ENCODE measurements at regions of chr7 and their contacts with region 1.

Region 1: GRCh38 chr7:151327659-151328058 is 14.0 kb upstream of the NUB1 start:
- DNase-seq: no peak

Region 2: DNA sequence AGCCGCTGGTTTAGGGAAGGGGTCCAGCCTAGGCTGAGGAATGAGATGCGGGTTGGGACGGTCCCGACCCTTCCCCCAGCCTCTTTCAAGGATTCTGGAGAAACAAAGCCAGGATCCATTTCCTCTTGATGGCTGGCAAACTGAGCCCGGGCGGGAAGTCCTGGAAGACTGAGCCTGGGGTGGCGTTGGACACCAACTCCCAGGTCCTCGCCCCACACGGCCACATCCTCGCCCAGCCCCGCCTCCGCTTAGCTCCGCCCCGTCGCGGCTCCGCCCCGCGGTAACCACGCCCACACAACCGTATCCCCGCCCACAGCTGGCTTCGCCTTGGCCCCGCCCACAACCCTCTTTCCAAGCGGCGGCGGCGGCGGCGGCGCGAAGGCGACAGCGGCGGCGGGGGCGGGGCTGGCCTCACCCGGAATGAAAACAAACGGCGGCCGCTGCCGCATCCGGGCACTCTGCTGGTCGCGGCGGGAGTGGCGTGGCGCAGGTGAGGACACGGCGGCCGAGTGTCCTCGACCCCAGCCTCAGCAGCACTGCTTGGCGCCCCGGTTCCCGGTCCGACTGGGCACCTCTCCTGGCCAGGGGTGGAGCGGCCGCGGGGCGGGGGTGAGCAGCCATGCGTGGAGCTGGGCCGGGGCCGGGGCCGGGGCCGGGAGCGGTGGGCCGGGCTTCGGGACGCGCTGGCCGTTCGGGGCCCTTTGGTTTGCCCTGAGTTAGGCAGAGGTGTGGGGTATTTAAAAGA is 13.9 kb after region 1 on chr7 and contains the start of gene NUB1:
- CTCF ChIA-PET with region 1: no interaction called
- POLR2A ChIA-PET with region 1: interaction called, 21 read pairs
- DNase-seq: peak; percentile 100

Region 3: GRCh38 chr7:151472644-151473380 is 145.2 kb after region 1 on chr7:
- CTCF ChIA-PET with region 1: no interaction called
- POLR2A ChIA-PET with region 1: no interaction called
- DNase-seq: no peak